Left cardiac atrium (tissue), 4 donors: ENCODE measurements at regions of chr10 and their contacts with region 1.

Region 1: GRCh38 chr10:30534465-30535144 is 94.9 kb downstream of the LYZL2 start:
- DNase-seq: peak; percentile 67
- ATAC-seq: peak; percentile 65 to 68

Region 2: DNA sequence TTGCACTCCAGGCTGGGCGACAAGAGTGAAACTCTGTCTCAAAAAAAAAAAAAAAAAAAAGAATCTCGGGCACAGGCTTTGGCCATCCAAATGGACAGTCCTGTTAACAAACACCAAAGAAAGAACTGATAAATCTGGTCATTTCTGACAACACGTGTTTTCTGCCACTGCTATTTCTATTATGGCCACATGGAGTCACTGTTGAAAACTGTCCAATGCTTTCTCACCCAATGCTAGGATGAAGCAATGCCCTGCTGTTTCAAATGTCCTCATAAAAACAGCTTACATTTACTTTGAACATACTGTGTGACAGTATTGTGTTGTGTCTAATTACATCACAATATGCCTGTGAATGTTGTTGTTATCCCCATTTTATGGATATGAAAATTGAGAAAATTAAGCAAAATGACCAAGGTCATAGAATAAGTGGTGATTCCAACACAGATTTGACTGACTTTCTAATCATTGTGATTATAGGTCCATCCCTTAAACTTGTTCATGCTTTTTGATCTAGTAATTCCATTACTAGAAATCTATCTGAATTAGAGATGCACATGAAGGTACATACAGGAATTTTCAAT is 120.5 kb before region 1 on chr10:
- intact Hi-C with region 1: loop called (anchors 2 to 5 kb)
- DNase-seq: no peak
- ATAC-seq: peak; percentile 77 to 78